ENCODE measurements at regions of chr10 and their contacts with region 1.

Region 1: GRCh38 chr10:72692057-72692910 is at the start of gene MCU:
- DNase-seq: peak; percentile 98
- H3K4me3 ChIP-seq: peak within 1 kb of the TSS; percentile 71
- H3K27ac ChIP-seq: peak within 1 kb of the TSS; percentile 78
- H3K4me1 ChIP-seq: peaks cover 13% of the 10 kb centered on the region
- H3K27me3 ChIP-seq: no peaks in the 10 kb centered on the region
- CTCF ChIP-seq: no peak
- total RNA-seq, gene MCU: 88.7 to 109 TPM

Region 2: DNA sequence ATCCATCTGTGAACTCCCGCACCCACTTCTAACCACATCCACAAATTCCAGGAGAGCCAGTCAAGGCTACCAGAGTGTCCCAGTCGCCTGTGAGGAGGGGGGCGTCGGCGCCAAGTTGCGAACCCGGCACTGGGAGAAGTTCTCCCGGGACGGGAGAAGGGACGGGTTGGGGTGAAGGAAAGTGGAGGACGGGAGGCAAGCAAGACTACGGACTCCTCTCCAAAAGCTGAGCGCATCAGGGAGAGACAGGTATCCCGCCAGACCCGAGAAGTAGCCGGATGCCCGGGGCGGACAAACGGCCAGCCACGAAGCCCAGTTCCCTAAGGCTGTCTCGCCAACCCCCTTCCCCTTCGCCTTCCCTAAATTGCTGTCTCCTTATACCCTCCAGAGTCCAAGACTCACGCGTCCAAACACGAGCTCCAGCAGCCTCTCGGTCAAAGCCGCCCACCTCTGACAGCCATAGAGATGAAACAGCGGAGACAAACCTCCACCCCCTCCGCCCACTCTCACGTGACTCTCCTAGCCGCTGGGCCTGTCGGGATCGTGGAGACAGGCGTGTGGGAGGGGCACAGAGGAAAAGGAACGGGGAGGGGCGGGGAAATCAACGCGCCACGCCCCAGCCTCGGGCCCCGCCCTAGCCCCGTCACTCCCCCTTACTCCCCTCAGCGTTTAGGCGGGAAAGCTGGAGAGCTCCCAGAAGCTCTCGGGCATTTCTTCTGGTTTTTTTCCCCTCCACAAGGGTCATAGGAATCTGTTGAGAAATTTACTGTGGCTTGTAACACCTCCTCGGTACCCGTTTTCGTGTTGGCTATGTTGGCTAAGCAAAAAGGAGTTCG is 66.5 kb before region 1 on chr10 and contains the start of gene MICU1:
- intact Hi-C with region 1: loop called (anchors 5 kb)
- DNase-seq: peak; percentile 98
- H3K4me3 ChIP-seq: peak within 1 kb of the TSS; percentile 94
- H3K27ac ChIP-seq: peak within 1 kb of the TSS; percentile 77
- H3K4me1 ChIP-seq: peaks cover 6% of the 10 kb centered on the region
- H3K27me3 ChIP-seq: no peaks in the 10 kb centered on the region
- CTCF ChIP-seq: no peak
- total RNA-seq, gene MICU1: 44.3 to 51.8 TPM

Region 3: GRCh38 chr10:72834183-72834825 is 142.0 kb after region 1 on chr10:
- intact Hi-C with region 1: loop called (anchors 5 kb)
- DNase-seq: peak; percentile 45
- H3K4me3 ChIP-seq: no peak overlapping the region
- H3K27ac ChIP-seq: no peak overlapping the region
- H3K4me1 ChIP-seq: peaks cover 6% of the 10 kb centered on the region
- H3K27me3 ChIP-seq: no peaks in the 10 kb centered on the region
- CTCF ChIP-seq: peak; percentile 45

Measured in colonic mucosa (tissue), 4 donors.